ENCODE measurements at regions of chr17 and their contacts with region 1.

Region 1: GRCh38 chr17:59914274-59914854 is 21.4 kb downstream of the RPS6KB1 start:
- DNase-seq: peak; percentile 75
- H3K4me3 ChIP-seq: no peak overlapping the region
- H3K27ac ChIP-seq: no peak overlapping the region
- H3K4me1 ChIP-seq: no peaks in the 10 kb centered on the region
- H3K27me3 ChIP-seq: no peaks in the 10 kb centered on the region
- CTCF ChIP-seq: peak; percentile 84
- EP300 ChIP-seq: no peak
- RAD21 ChIP-seq: peak; percentile 72

Region 2: DNA sequence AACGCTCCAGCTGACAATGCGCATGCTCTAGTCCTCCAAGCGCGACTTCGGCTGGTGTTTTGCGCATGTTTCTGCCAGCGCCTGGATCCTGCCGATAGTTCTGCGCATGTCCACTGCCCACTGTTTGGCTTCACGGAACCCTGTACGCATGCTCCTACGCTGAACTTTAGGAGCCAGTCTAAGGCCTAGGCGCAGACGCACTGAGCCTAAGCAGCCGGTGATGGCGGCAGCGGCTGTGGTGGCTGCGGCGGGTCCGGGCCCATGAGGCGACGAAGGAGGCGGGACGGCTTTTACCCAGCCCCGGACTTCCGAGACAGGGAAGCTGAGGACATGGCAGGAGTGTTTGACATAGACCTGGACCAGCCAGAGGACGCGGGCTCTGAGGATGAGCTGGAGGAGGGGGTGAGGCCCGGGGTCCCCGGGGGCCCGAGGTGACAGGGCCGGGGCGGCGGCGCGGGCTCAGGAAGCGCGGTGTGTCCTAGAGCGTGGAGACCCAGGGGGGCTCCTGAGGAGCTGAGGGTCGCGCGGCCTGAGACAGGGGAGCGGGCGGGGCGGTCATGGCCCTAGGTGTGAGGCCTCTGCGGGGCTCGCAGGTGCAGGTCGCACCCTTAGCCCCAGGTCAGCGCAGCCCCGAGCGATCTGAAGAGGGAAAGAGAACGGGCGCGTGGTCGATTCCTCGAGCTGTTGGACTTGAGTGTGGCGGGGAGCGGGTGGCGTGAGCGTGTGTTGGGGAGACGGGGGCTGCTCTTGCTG is 21.3 kb before region 1 on chr17 and contains the starts of genes RPS6KB1 and TUBD1:
- CTCF ChIA-PET with region 1: interaction called, 23 read pairs
- POLR2A ChIA-PET with region 1: no interaction called
- DNase-seq: peak; percentile 99
- H3K4me3 ChIP-seq: peak within 1 kb of the TSS; percentile 70 to 80
- H3K27ac ChIP-seq: peak within 1 kb of the TSS; percentile 58 to 64
- H3K4me1 ChIP-seq: peaks cover 3 to 17% of the 10 kb centered on the region in 2 experiments; a peak in 3 of 4 replicates
- H3K27me3 ChIP-seq: no peaks in the 10 kb centered on the region
- CTCF ChIP-seq: no peak
- EP300 ChIP-seq: no peak
- RAD21 ChIP-seq: no peak
- polyA plus RNA-seq, gene RPS6KB1: 10.0 and 13.4 TPM in 2 replicates
- polyA plus RNA-seq, gene TUBD1: 3.2 and 5.4 TPM in 2 replicates

Region 3: GRCh38 chr17:59941131-59941530 is 26.8 kb after region 1 on chr17:
- CTCF ChIA-PET with region 1: interaction called, 28 read pairs
- POLR2A ChIA-PET with region 1: no interaction called
- DNase-seq: no peak
- H3K4me3 ChIP-seq: no peak overlapping the region
- H3K27ac ChIP-seq: no peak overlapping the region
- H3K4me1 ChIP-seq: no peaks in the 10 kb centered on the region
- H3K27me3 ChIP-seq: no peaks in the 10 kb centered on the region
- CTCF ChIP-seq: no peak
- EP300 ChIP-seq: no peak
- RAD21 ChIP-seq: no peak

Region 4: GRCh38 chr17:59964482-59965328 is 50.3 kb after region 1 on chr17 and contains the start of gene RNFT1:
- CTCF ChIA-PET with region 1: interaction called, 15 read pairs
- POLR2A ChIA-PET with region 1: interaction called, 5 read pairs
- DNase-seq: peak; percentile 98
- H3K4me3 ChIP-seq: peak within 1 kb of the TSS; percentile 84 to 93
- H3K27ac ChIP-seq: peak within 1 kb of the TSS; percentile 80 to 84
- H3K4me1 ChIP-seq: peaks cover 0 to 15% of the 10 kb centered on the region in 2 experiments; a peak in 2 of 4 replicates
- H3K27me3 ChIP-seq: no peaks in the 10 kb centered on the region
- CTCF ChIP-seq: no peak
- EP300 ChIP-seq: no peak
- RAD21 ChIP-seq: no peak
- polyA plus RNA-seq, gene RNFT1: 11.8 and 13.2 TPM in 2 replicates

Region 5: DNA sequence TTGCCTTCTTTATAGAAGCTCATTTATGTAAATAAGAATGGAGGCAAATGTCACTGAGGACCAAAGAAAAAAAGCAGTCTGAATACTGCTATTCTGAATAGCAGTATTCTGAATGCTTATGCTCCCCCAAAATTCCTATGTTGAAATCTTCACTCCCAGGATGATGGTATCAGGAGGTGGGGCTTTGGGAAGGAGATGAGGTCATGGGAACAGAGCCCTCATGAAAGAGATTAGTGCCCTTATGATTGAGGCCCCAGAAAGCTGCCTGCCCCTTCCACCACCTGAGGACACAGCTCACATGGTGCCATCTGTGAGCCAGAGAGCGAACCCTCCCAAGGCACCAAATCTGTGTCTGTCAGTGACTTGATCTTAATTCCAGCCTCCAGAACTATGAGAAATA is 135.6 kb after region 1 on chr17:
- CTCF ChIA-PET with region 1: interaction called, 20 read pairs
- POLR2A ChIA-PET with region 1: no interaction called
- DNase-seq: no peak
- H3K4me3 ChIP-seq: no peak overlapping the region
- H3K27ac ChIP-seq: no peak overlapping the region
- H3K4me1 ChIP-seq: no peaks in the 10 kb centered on the region
- H3K27me3 ChIP-seq: no peaks in the 10 kb centered on the region
- CTCF ChIP-seq: no peak
- EP300 ChIP-seq: no peak
- RAD21 ChIP-seq: no peak

Region 6: GRCh38 chr17:60577147-60577915 is 663.0 kb after region 1 on chr17:
- CTCF ChIA-PET with region 1: no interaction called
- POLR2A ChIA-PET with region 1: no interaction called
- DNase-seq: peak; percentile 33
- H3K4me3 ChIP-seq: no peak overlapping the region; a peak in 1 of 4 replicates
- H3K27ac ChIP-seq: peak overlapping the region in 1 of 2 experiments; percentile 25; a peak in 1 of 4 replicates
- H3K4me1 ChIP-seq: peaks cover 2 to 6% of the 10 kb centered on the region in 2 experiments; a peak in 2 of 4 replicates
- H3K27me3 ChIP-seq: no peaks in the 10 kb centered on the region
- CTCF ChIP-seq: peak; percentile 40
- EP300 ChIP-seq: no peak
- RAD21 ChIP-seq: peak; percentile 52